GM10248 (cell line): ENCODE measurements at regions of chr5 and their contacts with region 1.

Region 1: GRCh38 chr5:75336625-75337339 is at the start of gene HMGCR:
- DNase-seq: peak; percentile 95
- CTCF ChIP-seq: peak; percentile 51

Region 2: GRCh38 chr5:75351139-75351926 is 14.6 kb after region 1 on chr5:
- CTCF ChIA-PET with region 1: interaction called, 19 read pairs
- POLR2A ChIA-PET with region 1: interaction called, 4 read pairs
- DNase-seq: no peak
- CTCF ChIP-seq: no peak

Region 3: DNA sequence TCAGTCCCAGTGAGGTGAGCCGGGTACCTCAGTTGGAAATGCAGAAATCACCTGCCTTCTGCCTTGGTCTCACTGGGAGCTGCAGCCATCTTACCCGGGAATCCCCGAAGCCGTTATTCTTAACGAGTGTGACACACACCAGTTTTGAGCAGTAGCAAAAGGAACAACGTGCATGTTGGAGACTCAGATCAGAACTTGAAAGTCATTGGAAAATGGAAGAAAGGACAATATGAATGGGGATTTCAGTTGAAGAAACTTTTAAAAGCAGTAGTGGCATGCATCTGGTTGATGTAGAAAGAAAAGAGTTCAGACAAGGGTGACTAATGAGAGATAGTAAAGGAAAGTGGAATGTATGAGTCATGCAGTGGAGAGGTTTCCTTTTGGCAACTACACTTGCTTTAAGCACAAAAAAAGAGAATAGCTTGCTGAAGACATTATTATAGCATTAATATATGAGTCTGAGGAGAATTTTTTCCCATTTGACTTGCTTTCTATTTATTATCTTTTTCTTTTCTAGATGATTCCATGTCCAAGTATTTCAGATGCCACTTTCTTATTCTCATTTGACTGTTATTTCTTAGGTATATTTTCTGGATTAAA is 230.0 kb after region 1 on chr5:
- CTCF ChIA-PET with region 1: no interaction called
- POLR2A ChIA-PET with region 1: interaction called, 12 read pairs
- DNase-seq: peak; percentile 61
- CTCF ChIP-seq: no peak